IMR-90 (cell line): ENCODE measurements at regions of chr9 and their contacts with region 1.

Region 1: DNA sequence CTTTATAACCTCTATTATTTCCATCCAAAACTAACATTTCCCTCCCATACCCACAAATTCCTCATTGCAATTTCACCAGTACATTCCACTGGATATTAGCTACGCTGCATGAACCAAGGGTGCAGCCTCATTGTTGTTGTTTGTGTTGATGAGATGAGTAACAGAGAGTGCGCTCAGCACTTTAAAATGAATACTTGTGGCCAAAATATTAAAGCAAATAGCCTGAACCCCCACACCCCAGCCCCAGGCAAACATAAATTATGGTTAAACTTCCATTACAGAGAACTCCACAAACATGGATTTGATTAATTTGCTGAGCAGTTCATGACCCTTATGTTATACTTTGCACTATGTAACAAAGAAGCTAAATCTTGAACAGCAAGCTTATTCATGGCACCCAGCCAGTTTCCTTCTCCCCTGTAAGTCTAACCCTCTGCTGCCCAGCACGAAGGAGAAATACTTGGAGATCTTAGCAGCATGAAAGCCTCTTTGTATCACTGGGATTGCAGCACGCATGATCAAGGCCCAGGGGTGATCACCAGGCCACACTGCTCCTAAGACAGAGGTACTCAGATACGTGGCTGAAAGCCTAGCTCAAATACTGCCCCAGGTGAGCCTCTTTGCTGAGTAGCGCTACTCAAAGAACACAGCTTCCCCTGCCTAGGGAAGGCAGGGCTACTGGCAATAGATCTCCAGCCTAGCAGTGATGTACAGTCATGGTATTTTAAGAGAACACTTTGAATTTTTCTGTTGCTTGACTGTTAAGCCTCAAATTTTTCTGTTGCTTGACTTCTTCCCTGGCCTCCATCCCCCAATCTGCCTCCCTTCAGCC is 205.1 kb downstream of the DOCK8 start:
- DNase-seq: no peak
- ATAC-seq: peak; percentile 81
- H3K4me3 ChIP-seq: no peak overlapping the region
- H3K27ac ChIP-seq: no peak overlapping the region
- H3K4me1 ChIP-seq: no peaks in the 10 kb centered on the region
- H3K27me3 ChIP-seq: no peaks in the 10 kb centered on the region
- CTCF ChIP-seq: no peak
- POLR2A ChIP-seq: no peak
- RAD21 ChIP-seq: no peak

Region 2: GRCh38 chr9:385818-386398 is 33.9 kb before region 1 on chr9:
- CTCF ChIA-PET with region 1: no interaction called
- POLR2A ChIA-PET with region 1: no interaction called
- dilution Hi-C with region 1: no loop called
- in situ Hi-C with region 1: no loop called
- intact Hi-C with region 1: no loop called
- DNase-seq: peak; percentile 52
- ATAC-seq: peak; percentile 99
- H3K4me3 ChIP-seq: no peak overlapping the region
- H3K27ac ChIP-seq: no peak overlapping the region
- H3K4me1 ChIP-seq: no peaks in the 10 kb centered on the region
- H3K27me3 ChIP-seq: peaks cover 3% of the 10 kb centered on the region
- CTCF ChIP-seq: peak; percentile 81
- POLR2A ChIP-seq: no peak
- RAD21 ChIP-seq: peak; percentile 80

Region 3: DNA sequence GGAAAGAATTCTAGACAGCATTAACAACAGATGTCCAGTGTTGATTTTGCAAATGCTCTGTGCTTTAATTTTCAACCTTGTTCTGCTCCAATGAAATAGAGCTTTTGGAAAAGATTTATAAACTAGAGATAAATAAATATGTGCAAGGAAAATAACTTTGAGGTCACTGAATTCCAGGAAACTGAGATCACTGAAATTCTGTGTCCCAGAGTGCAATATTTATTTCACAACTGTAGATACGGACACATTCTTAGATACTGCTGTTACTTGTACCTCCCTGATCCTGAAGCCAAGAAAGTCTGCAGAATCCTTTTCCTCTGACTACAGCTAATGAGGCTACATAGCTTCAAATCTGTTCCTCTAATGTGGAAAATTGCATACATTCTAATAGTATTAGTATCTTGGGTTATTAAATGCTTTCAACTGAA is 17.8 kb after region 1 on chr9:
- CTCF ChIA-PET with region 1: no interaction called
- POLR2A ChIA-PET with region 1: no interaction called
- dilution Hi-C with region 1: no loop called
- in situ Hi-C with region 1: no loop called
- intact Hi-C with region 1: loop called (anchors 1 kb)
- DNase-seq: peak; percentile 77
- ATAC-seq: peak; percentile 83
- H3K4me3 ChIP-seq: no peak overlapping the region
- H3K27ac ChIP-seq: peak overlapping the region; percentile 98; the same call in 1 of the 2 replicates
- H3K4me1 ChIP-seq: peaks cover 13% of the 10 kb centered on the region
- H3K27me3 ChIP-seq: peaks cover 4% of the 10 kb centered on the region
- CTCF ChIP-seq: no peak
- POLR2A ChIP-seq: no peak
- RAD21 ChIP-seq: no peak

Region 4: GRCh38 chr9:607417-607816 is 187.6 kb after region 1 on chr9:
- CTCF ChIA-PET with region 1: no interaction called
- POLR2A ChIA-PET with region 1: no interaction called
- dilution Hi-C with region 1: no loop called
- in situ Hi-C with region 1: no loop called
- intact Hi-C with region 1: no loop called
- DNase-seq: no peak
- ATAC-seq: no peak
- H3K4me3 ChIP-seq: no peak overlapping the region
- H3K27ac ChIP-seq: no peak overlapping the region
- H3K4me1 ChIP-seq: no peaks in the 10 kb centered on the region
- H3K27me3 ChIP-seq: no peaks in the 10 kb centered on the region; the same call in 1 of the 2 replicates
- CTCF ChIP-seq: no peak
- POLR2A ChIP-seq: no peak
- RAD21 ChIP-seq: no peak